ENCODE measurements at regions of chr6 and their contacts with region 1.

Region 1: GRCh38 chr6:53432318-53433161 is 83.8 kb upstream of the ELOVL5 start:
- DNase-seq: peak; percentile 79 to 92 (median 91)
- H3K4me3 ChIP-seq: peak overlapping the region in 1 of 3 experiments; percentile 59
- H3K4me3 Mint-ChIP-seq: peak overlapping the region in 1 of 2 donors; percentile 78
- H3K27ac ChIP-seq: peak overlapping the region; percentile 76 to 91
- H3K27ac Mint-ChIP-seq: peak overlapping the region; percentile 89 to 98 (median 93)
- H3K4me1 ChIP-seq: peaks cover 32 to 39% of the 10 kb centered on the region in 2 donors
- H3K4me1 Mint-ChIP-seq: peaks cover 41% of the 10 kb centered on the region
- H3K27me3 ChIP-seq: no peaks in the 10 kb centered on the region
- H3K27me3 Mint-ChIP-seq: no peaks in the 10 kb centered on the region
- CTCF ChIP-seq: no peak

Region 2: DNA sequence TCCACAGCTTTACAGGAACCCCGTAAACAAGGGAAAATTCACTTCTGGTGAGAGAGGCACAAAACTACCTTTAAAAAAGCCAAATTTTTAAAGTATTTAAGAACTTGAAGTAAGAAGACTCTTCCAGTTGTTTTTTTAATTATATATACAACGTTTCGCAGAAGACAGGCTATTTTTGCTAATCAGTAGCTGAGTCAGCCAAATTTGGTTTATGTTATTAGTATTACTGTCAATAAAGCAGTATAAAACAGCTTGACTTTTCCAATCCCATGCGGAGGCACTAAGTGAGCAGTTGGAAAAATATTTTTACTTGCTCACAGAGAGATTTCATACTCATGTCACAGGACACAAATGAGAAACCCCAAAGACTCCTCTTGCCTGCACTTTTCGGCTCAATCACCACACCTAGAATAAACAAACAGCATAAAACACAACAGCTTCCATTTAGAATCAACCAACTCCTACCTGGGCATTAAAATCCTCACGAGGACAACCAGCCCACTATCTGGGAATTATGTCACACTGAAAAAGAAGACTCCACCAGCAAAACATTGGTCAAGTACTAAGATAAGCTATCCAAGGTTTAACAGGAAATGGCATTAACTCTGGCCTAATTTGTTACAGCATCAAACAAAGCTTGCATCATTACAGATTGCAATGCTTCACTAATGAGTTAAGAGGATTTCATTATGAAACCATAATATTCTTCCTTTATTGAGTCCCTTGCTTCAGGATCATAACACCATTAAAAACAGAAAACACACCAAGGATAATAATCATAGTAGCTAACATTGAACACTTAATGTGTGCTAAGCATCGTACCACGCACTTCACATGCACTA is 110.1 kb before region 1 on chr6:
- intact Hi-C with region 1: no loop called
- DNase-seq: peak in 1 of 3 donors; percentile 16
- H3K4me3 ChIP-seq: no peak overlapping the region
- H3K4me3 Mint-ChIP-seq: no peak overlapping the region
- H3K27ac ChIP-seq: peak overlapping the region in 1 of 2 donors; percentile 49
- H3K27ac Mint-ChIP-seq: peak overlapping the region; percentile 8 to 86 (median 58)
- H3K4me1 ChIP-seq: peaks cover 9 to 21% of the 10 kb centered on the region in 2 donors
- H3K4me1 Mint-ChIP-seq: peaks cover 43% of the 10 kb centered on the region
- H3K27me3 ChIP-seq: no peaks in the 10 kb centered on the region
- H3K27me3 Mint-ChIP-seq: peaks cover 0 to 2% (median 1%) of the 10 kb centered on the region in 3 donors
- CTCF ChIP-seq: no peak

Region 3: GRCh38 chr6:53359072-53359842 is 73.3 kb before region 1 on chr6:
- intact Hi-C with region 1: loop called (anchors 5 to 10 kb)
- DNase-seq: peak; percentile 88 to 95 (median 94)
- H3K4me3 ChIP-seq: peak overlapping the region; percentile 56 to 85 (median 70)
- H3K4me3 Mint-ChIP-seq: peak overlapping the region; percentile 90 to 96
- H3K27ac ChIP-seq: peak overlapping the region; percentile 82 to 93
- H3K27ac Mint-ChIP-seq: peak overlapping the region; percentile 93 to 98 (median 97)
- H3K4me1 ChIP-seq: peaks cover 17 to 22% of the 10 kb centered on the region in 2 donors
- H3K4me1 Mint-ChIP-seq: peaks cover 27% of the 10 kb centered on the region
- H3K27me3 ChIP-seq: no peaks in the 10 kb centered on the region
- H3K27me3 Mint-ChIP-seq: peaks cover 0 to 7% (median 7%) of the 10 kb centered on the region in 3 donors
- CTCF ChIP-seq: no peak

Region 4: GRCh38 chr6:53377793-53378192 is 54.7 kb before region 1 on chr6:
- intact Hi-C with region 1: no loop called
- DNase-seq: no peak
- H3K4me3 ChIP-seq: no peak overlapping the region
- H3K4me3 Mint-ChIP-seq: no peak overlapping the region
- H3K27ac ChIP-seq: no peak overlapping the region
- H3K27ac Mint-ChIP-seq: no peak overlapping the region
- H3K4me1 ChIP-seq: no peaks in the 10 kb centered on the region
- H3K4me1 Mint-ChIP-seq: no peaks in the 10 kb centered on the region
- H3K27me3 ChIP-seq: peaks cover 0 to 2% of the 10 kb centered on the region in 2 donors
- H3K27me3 Mint-ChIP-seq: peaks cover 0 to 4% (median 2%) of the 10 kb centered on the region in 3 donors
- CTCF ChIP-seq: no peak